Heart right ventricle (tissue), 16 donors: ENCODE measurements at regions of chr12 and their contacts with region 1.

Region 1: GRCh38 chr12:97148941-97149559 is 242.0 kb downstream of the NEDD1 start:
- DNase-seq: peak; percentile 39 to 47
- ATAC-seq: peak; percentile 70 to 88 (median 80)
- H3K4me3 ChIP-seq: no peak overlapping the region
- H3K27ac ChIP-seq: no peak overlapping the region
- H3K4me1 ChIP-seq: no peaks in the 10 kb centered on the region
- H3K27me3 ChIP-seq: no peaks in the 10 kb centered on the region
- CTCF ChIP-seq: peak; percentile 34 to 82 (median 72)

Region 2: GRCh38 chr12:97308576-97309198 is 159.6 kb after region 1 on chr12:
- intact Hi-C with region 1: loop called in 8 of 10 experiments (anchors 2 to 10 kb)
- DNase-seq: peak in 1 of 2 donors; percentile 20
- ATAC-seq: no peak
- H3K4me3 ChIP-seq: no peak overlapping the region
- H3K27ac ChIP-seq: no peak overlapping the region
- H3K4me1 ChIP-seq: peaks cover 0 to 6% (median 0%) of the 10 kb centered on the region in 9 donors
- H3K27me3 ChIP-seq: peaks cover 0 to 10% (median 0%) of the 10 kb centered on the region in 7 donors
- CTCF ChIP-seq: peak; percentile 52 to 87 (median 77)

Region 3: DNA sequence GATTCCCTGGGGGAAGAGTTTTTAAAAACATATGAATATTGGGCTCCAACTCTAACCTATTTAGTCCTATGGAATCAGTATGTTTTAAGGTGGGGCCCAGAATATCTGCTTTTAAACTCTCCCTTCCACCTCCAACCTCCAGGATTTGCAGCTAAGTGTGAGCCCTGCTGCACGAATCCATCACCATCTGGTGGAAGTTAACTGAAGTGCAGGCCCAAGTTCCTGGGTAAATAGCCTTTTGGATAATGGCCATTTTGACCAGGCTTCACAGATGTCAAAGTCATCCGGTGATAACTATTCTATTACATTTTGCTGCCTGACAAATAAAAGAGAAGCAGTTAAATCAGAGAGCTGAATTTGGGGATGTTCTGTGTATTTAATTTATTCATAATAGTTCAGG is 255.5 kb after region 1 on chr12:
- intact Hi-C with region 1: loop called in 2 of 10 experiments (anchors 10 kb)
- DNase-seq: peak in 1 of 2 donors; percentile 11
- ATAC-seq: no peak
- H3K4me3 ChIP-seq: no peak overlapping the region
- H3K27ac ChIP-seq: no peak overlapping the region
- H3K4me1 ChIP-seq: no peaks in the 10 kb centered on the region
- H3K27me3 ChIP-seq: no peaks in the 10 kb centered on the region
- CTCF ChIP-seq: peak; percentile 31 to 71 (median 61)

Region 4: DNA sequence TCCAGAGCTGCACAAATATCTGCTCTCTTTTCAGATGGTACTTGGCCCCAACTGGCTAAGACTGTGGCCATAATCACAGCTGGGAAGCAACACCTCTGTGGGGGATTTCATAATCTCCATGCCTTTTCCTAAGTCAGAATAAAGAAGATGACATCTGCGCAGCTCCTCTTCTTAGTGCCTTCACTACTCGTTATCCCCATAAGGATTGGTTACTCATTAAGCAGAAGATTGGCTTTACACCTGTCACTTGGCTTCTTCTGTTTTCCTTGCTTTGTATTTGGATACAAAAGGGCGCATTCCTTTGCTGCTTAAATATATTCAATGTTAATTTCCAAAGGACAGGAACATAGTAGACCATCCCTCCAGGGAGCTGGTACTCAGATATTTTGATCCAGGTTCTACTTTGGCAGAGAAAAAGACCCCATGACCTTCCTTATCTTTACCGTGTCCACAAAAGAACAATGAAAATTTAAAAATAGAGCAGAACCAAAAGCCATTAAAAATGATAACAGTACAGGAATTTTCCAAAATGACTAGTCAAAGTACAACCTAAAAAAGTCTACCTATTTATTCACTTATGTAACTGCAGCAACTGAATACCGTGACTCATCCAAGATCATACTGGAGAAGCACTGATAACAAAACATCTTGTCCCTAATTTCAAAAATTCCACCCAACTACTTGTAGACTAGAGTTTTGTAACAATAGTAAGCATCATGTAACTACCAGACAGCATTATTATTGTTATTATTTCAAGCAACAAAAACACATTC is 1014.0 kb after region 1 on chr12:
- intact Hi-C with region 1: loop called in 1 of 10 experiments (anchors 10 kb)
- DNase-seq: peak in 1 of 2 donors; percentile 4
- ATAC-seq: peak; percentile 55 to 93 (median 87)
- H3K4me3 ChIP-seq: no peak overlapping the region
- H3K27ac ChIP-seq: peak overlapping the region in 5 of 10 donors; percentile 27 to 74 (median 67)
- H3K4me1 ChIP-seq: peaks cover 0 to 11% (median 4%) of the 10 kb centered on the region in 9 donors
- H3K27me3 ChIP-seq: no peaks in the 10 kb centered on the region
- CTCF ChIP-seq: no peak